Caco-2 (cell line): ENCODE measurements at regions of chr7 and their contacts with region 1.

Region 1: GRCh38 chr7:119482209-119482608 is 790.8 kb upstream of the KCND2 start:
- DNase-seq: peak; percentile 43 to 46
- H3K4me3 ChIP-seq: no peak overlapping the region
- H3K4me3 Mint-ChIP-seq: no peak overlapping the region
- H3K27ac Mint-ChIP-seq: no peak overlapping the region
- H3K4me1 ChIP-seq: no peaks in the 10 kb centered on the region
- H3K4me1 Mint-ChIP-seq: peaks cover 7% of the 10 kb centered on the region
- H3K27me3 ChIP-seq: no peaks in the 10 kb centered on the region
- H3K27me3 Mint-ChIP-seq: peaks cover 6% of the 10 kb centered on the region
- CTCF ChIP-seq: peak; percentile 31 to 56

Region 2: DNA sequence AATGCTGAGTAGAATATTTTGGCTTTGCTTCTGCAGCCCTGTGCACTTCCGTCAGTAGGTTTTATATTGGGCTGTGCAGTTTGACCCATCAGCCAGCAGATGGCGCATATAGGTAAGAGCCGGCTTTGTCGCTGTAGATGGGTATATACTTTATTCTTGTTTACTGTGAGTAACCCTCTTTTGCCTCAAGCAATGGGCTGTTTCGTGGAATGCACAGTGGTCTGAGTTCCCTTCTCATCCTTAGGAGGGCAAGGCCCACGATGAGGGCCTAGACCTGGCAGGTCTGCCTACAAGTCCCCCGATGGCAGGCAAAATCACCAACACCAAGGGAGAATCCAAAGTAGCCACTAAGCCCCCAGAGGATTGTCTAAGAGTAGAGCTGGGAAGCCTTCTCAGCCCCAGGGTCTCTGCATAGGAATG is 212.2 kb before region 1 on chr7:
- CTCF ChIA-PET with region 1: no interaction called
- POLR2A ChIA-PET with region 1: no interaction called
- intact Hi-C with region 1: loop called (anchors 5 kb)
- DNase-seq: peak; percentile 65 to 66
- H3K4me3 ChIP-seq: no peak overlapping the region
- H3K4me3 Mint-ChIP-seq: no peak overlapping the region
- H3K27ac Mint-ChIP-seq: no peak overlapping the region
- H3K4me1 ChIP-seq: no peaks in the 10 kb centered on the region
- H3K4me1 Mint-ChIP-seq: no peaks in the 10 kb centered on the region
- H3K27me3 ChIP-seq: no peaks in the 10 kb centered on the region
- H3K27me3 Mint-ChIP-seq: peaks cover 4% of the 10 kb centered on the region
- CTCF ChIP-seq: peak; percentile 84 to 89

Region 3: DNA sequence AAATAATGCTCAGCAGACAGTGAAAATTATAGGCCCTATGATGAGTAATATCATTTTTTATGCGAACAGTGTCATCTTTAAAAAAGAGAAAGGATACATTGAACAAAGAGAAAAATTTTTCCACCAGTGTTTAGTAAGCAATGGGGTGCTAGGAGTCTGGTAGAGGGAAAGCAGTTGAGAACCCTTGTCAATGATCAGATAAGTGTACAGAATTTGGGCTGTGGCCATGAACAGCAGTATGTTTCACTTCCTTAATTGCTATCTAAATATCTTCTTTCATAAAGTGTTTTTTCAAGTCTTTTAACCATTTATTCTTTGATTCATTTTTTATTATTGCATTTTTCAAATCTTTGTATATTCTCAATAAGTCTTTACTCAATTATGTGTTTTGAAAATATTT is 40.1 kb after region 1 on chr7:
- CTCF ChIA-PET with region 1: no interaction called
- POLR2A ChIA-PET with region 1: no interaction called
- intact Hi-C with region 1: no loop called
- DNase-seq: no peak
- H3K4me3 ChIP-seq: no peak overlapping the region
- H3K4me3 Mint-ChIP-seq: no peak overlapping the region
- H3K27ac Mint-ChIP-seq: no peak overlapping the region
- H3K4me1 ChIP-seq: no peaks in the 10 kb centered on the region
- H3K4me1 Mint-ChIP-seq: no peaks in the 10 kb centered on the region
- H3K27me3 ChIP-seq: no peaks in the 10 kb centered on the region; the same call in 1 of the 2 replicates
- H3K27me3 Mint-ChIP-seq: no peaks in the 10 kb centered on the region
- CTCF ChIP-seq: no peak